ENCODE measurements at regions of chr17 and their contacts with region 1.

Region 1: GRCh38 chr17:63542942-63543821 is 7.1 kb upstream of the DCAF7 start:
- DNase-seq: no peak
- H3K4me3 ChIP-seq: no peak overlapping the region
- H3K27ac ChIP-seq: no peak overlapping the region
- H3K4me1 ChIP-seq: peaks cover 18% of the 10 kb centered on the region
- H3K27me3 ChIP-seq: peaks cover 3% of the 10 kb centered on the region
- CTCF ChIP-seq: no peak

Region 2: DNA sequence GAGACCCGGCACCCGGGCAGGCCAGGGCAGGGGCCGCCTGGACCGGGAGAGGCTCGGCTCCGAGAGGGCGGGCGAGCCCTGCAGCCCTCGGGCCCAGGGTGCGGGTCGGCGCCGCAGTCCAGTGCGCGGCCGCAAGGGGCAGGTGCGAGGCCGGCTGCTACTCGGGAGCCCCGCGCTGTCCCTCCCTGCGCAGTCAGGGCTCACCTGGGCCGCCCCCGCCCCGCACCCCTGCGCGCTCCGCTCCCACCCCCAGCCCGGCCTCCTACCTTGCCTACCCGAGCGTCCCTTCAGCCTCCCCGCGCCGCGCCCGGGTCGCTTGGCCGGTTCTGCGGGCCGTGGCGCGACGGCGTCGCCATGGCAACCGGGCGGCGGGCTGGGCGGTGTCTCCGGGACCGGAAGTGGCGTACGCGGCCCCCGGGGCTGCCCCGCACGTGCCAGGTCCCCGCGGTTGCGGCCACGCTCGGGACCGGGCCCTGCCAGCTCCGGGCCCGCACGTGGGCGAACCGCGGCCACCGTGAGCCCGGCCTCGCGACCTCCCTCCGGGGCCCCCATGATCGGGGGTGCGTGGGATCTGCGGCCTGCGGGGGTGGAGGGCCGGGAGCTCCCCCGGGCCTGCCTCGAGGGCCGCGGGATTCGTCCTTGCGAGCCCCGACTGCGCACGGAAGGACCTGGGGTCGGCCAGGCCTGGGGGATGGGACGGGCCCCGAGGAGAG is 97.0 kb before region 1 on chr17 and contains the start of gene CYB561:
- CTCF ChIA-PET with region 1: no interaction called
- dilution Hi-C with region 1: loop called (anchors 5 kb)
- in situ Hi-C with region 1: no loop called
- intact Hi-C with region 1: no loop called
- DNase-seq: peak; percentile 63
- H3K4me3 ChIP-seq: peak within 1 kb of the TSS; percentile 59 to 72 (median 71)
- H3K27ac ChIP-seq: peak within 1 kb of the TSS; percentile 79
- H3K4me1 ChIP-seq: peaks cover 17% of the 10 kb centered on the region
- H3K27me3 ChIP-seq: no peaks in the 10 kb centered on the region
- CTCF ChIP-seq: peak; percentile 29 to 54
- total RNA-seq, gene CYB561: 26.6 to 35.8 TPM

Region 3: GRCh38 chr17:63564562-63564961 is 21.4 kb after region 1 on chr17:
- CTCF ChIA-PET with region 1: no interaction called
- dilution Hi-C with region 1: no loop called
- in situ Hi-C with region 1: no loop called
- intact Hi-C with region 1: no loop called
- DNase-seq: no peak
- H3K4me3 ChIP-seq: no peak overlapping the region
- H3K27ac ChIP-seq: no peak overlapping the region
- H3K4me1 ChIP-seq: no peaks in the 10 kb centered on the region
- H3K27me3 ChIP-seq: no peaks in the 10 kb centered on the region
- CTCF ChIP-seq: no peak

Measured in mammary epithelial cell (primary cell).